ENCODE measurements at regions of chr10 and their contacts with region 1.

Region 1: GRCh38 chr10:114876602-114877300 is 55.2 kb downstream of the FHIP2A start:
- DNase-seq: peak; percentile 11 to 53
- ATAC-seq: peak; percentile 65 to 90
- H3K4me3 ChIP-seq: no peak overlapping the region
- H3K27ac ChIP-seq: no peak overlapping the region
- H3K4me1 ChIP-seq: no peaks in the 10 kb centered on the region
- H3K27me3 ChIP-seq: peaks cover 0 to 3% (median 0%) of the 10 kb centered on the region in 3 donors
- CTCF ChIP-seq: peak; percentile 62 to 80 (median 66)
- POLR2A ChIP-seq: no peak

Region 2: GRCh38 chr10:114593240-114593784 is 283.4 kb before region 1 on chr10:
- in situ Hi-C with region 1: no loop called
- intact Hi-C with region 1: no loop called
- DNase-seq: no peak
- ATAC-seq: no peak
- H3K4me3 ChIP-seq: no peak overlapping the region
- H3K27ac ChIP-seq: no peak overlapping the region
- H3K4me1 ChIP-seq: no peaks in the 10 kb centered on the region
- H3K27me3 ChIP-seq: no peaks in the 10 kb centered on the region
- CTCF ChIP-seq: no peak
- POLR2A ChIP-seq: no peak

Region 3: GRCh38 chr10:115118346-115118745 is 241.6 kb after region 1 on chr10:
- in situ Hi-C with region 1: loop called in 3 of 4 experiments (anchors 5 to 10 kb)
- intact Hi-C with region 1: no loop called
- DNase-seq: no peak
- ATAC-seq: no peak
- H3K4me3 ChIP-seq: no peak overlapping the region
- H3K27ac ChIP-seq: no peak overlapping the region
- H3K4me1 ChIP-seq: peaks cover 0 to 5% of the 10 kb centered on the region in 2 donors
- H3K27me3 ChIP-seq: no peaks in the 10 kb centered on the region
- CTCF ChIP-seq: no peak
- POLR2A ChIP-seq: no peak

Region 4: DNA sequence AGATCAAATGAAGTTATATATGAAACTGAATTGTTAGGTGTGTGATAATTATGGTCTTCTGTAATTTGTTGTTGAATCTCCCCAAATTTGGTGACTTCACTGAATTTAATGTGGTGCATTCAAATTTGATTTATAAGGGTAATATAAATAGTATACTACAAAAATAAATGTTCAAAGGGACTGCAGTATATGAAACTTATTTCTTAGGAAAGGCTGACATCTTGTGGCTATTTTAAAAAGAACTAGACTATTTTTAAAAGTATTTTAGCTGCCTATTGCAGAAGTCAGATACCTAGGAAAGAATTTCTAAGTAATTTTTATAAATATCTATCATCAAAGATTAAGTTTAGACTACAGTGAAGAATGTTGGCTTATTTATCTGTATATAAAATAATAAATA is 253.0 kb after region 1 on chr10:
- in situ Hi-C with region 1: loop called in 3 of 4 experiments (anchors 5 to 10 kb)
- intact Hi-C with region 1: loop called (anchors 1 kb)
- DNase-seq: no peak
- ATAC-seq: peak in 1 of 2 donors; percentile 44
- H3K4me3 ChIP-seq: no peak overlapping the region
- H3K27ac ChIP-seq: no peak overlapping the region
- H3K4me1 ChIP-seq: no peaks in the 10 kb centered on the region
- H3K27me3 ChIP-seq: no peaks in the 10 kb centered on the region
- CTCF ChIP-seq: peak; percentile 19 to 42 (median 40)
- POLR2A ChIP-seq: no peak

Measured in gastrocnemius medialis (tissue), 4 donors.